Right ventricle myocardium inferior (tissue), 1 donor: ENCODE measurements at regions of chr3 and their contacts with region 1.

Region 1: DNA sequence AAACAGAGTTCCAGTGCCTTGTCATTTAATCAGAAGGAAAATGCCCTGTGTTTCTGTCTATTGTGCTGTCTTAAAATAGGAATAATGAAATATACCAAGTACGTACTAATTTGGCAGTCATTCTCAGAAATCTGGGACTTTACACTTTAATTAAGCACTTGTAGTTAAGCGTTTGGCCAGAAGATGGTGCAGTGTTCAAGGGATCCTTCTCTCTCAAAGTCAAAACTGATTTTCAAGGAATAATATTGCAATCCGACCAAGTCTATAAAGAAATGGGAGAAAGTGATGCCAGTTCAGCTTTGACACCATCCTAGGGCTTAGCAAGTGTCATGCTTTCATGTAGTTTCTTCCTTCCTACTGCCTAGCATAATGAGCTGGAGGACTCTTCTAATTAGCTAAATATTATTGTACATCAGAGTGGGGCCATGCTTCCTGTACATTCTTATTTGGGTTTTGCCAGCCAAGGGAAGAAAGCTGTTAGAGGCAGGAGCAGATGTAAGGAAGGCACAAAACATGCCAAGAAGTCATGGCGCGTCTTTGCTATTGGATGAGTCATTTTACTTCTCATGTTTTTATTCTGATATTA is 64.8 kb downstream of the SAMMSON start:
- DNase-seq: no peak
- ATAC-seq: peak; percentile 31

Region 2: GRCh38 chr3:70358978-70359580 is 294.8 kb after region 1 on chr3:
- intact Hi-C with region 1: loop called (anchors 5 kb)
- DNase-seq: no peak
- ATAC-seq: no peak